Activated naive CD4-positive, alpha-beta T cell treated with anti-CD3 and anti-CD28 coated beads for 36 hours (primary cell): ENCODE measurements at regions of chr3 and their contacts with region 1.

Region 1: DNA sequence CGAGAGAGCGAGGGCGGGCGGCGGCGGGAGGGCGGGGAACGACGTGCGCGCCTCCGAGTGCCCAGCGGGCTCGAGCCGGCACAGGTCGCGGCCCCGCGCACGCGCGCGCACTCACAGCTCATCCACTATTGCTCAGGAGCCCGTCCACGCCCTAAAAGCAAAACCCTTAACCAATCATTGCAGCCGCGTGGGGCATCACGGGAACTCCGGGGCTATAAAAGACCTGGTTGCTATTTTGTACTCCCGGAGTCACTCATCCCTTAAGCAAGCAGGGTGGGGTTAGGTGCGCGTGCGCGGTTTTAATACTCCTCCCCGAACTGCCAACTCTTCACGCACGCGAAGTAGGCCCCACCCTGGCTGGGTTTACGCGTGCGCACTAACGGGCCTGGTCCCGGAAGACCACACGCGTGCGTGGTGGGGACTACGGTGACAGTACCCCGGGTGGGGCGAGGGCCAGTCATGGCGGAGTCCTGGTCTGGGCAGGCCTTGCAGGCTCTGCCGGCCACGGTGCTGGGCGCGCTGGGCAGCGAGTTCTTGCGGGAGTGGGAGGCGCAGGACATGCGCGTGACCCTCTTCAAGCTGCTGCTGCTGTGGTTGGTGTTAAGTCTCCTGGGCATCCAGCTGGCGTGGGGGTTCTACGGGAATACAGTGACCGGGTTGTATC is at the starts of genes RHOA and TCTA:
- DNase-seq: peak; percentile 99
- H3K4me3 Mint-ChIP-seq: peak within 1 kb of the TSS; percentile 94
- H3K27ac Mint-ChIP-seq: peak within 1 kb of the TSS; percentile 92
- H3K4me1 Mint-ChIP-seq: peaks cover 65% of the 10 kb centered on the region
- H3K27me3 Mint-ChIP-seq: no peaks in the 10 kb centered on the region
- total RNA-seq, gene RHOA: 463 to 491 TPM
- total RNA-seq, gene TCTA: 9.4 to 9.5 TPM

Region 2: DNA sequence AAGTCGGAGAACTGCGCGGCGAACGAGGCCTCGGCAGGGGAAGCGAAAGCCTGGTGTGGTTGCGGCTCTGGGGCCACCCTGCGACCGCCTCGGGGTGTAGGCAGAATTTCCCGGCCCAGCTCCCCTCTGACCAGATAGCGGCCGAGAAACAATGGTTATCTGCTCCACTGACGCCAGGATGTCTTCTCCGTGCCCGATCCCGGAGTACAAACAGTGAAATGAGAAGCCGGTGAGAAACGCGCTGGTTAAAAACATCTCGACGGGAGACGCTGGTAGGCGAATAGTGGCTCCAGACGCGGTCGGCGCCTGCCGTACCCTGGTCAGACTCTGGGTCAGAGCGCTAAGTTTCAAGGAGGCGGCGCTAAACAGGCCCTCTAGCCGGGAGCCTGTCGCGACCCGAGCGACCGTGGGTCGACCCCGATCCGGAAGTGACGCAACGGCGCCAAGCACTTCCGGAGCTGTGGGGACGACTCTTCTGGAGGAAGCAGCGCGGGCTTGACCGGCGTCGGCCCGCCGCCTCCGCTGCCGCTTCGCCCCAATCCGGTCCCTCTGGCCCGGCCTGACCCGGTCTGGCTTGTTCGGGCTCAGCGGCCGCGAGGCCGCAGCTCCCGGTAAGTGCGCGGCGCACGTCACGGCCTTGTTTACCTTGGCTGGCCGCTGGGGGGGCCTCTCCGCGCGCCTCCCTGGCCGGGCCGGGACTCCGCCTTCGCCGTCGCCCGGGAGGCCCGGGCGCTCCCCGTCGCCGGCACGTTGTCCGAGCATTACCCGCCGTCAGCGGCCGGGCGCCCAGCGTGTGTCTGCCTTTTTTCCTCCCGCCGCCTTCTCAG is 493.5 kb before region 1 on chr3 and contains the start of gene ARIH2:
- CTCF ChIA-PET with region 1: no interaction called
- intact Hi-C with region 1: loop called (anchors 1 kb)
- DNase-seq: peak; percentile 89
- H3K4me3 Mint-ChIP-seq: peak within 1 kb of the TSS; percentile 98
- H3K27ac Mint-ChIP-seq: peak within 1 kb of the TSS; percentile 100
- H3K4me1 Mint-ChIP-seq: peaks cover 29% of the 10 kb centered on the region
- H3K27me3 Mint-ChIP-seq: no peaks in the 10 kb centered on the region
- total RNA-seq, gene ARIH2: 96.1 to 99.1 TPM

Region 3: GRCh38 chr3:49358217-49358883 is 53.8 kb before region 1 on chr3 and contains the start of gene GPX1:
- CTCF ChIA-PET with region 1: interaction called, 3 read pairs
- intact Hi-C with region 1: loop called (anchors 1 kb)
- DNase-seq: peak; percentile 93
- H3K4me3 Mint-ChIP-seq: peak within 1 kb of the TSS; percentile 92
- H3K27ac Mint-ChIP-seq: peak within 1 kb of the TSS; percentile 94
- H3K4me1 Mint-ChIP-seq: peaks cover 23% of the 10 kb centered on the region
- H3K27me3 Mint-ChIP-seq: no peaks in the 10 kb centered on the region
- total RNA-seq, gene GPX1: 198 to 202 TPM

Region 4: GRCh38 chr3:49428697-49429100 is 16.6 kb after region 1 on chr3:
- CTCF ChIA-PET with region 1: interaction called, 4 read pairs
- intact Hi-C with region 1: loop called (anchors 1 kb)
- DNase-seq: no peak
- H3K4me3 Mint-ChIP-seq: peak overlapping the region; percentile 90
- H3K27ac Mint-ChIP-seq: peak overlapping the region; percentile 93
- H3K4me1 Mint-ChIP-seq: peaks cover 12% of the 10 kb centered on the region
- H3K27me3 Mint-ChIP-seq: no peaks in the 10 kb centered on the region

Region 5: DNA sequence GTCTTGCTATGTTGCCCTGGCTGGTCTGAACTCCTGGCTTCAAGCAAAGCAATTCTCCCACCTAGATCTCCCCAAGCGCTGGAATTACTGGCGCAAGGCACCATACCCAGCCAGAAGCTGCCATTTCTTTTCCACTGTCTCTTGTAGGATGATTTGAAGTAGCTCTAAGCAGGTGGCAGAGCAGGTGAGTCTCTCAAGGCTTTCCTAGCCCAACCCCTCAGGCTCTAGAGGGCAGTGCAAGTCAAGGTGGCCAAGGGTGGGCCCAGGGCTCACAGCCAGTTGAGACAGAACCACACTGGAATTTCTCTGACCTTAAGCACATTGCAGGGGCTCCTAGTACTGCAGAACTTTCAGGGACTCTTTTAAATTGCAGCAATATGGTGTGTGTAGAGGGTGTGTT is 42.4 kb after region 1 on chr3:
- CTCF ChIA-PET with region 1: interaction called, 23 read pairs
- intact Hi-C with region 1: loop called (anchors 1 kb)
- DNase-seq: peak; percentile 30
- H3K4me3 Mint-ChIP-seq: no peak overlapping the region
- H3K27ac Mint-ChIP-seq: no peak overlapping the region
- H3K4me1 Mint-ChIP-seq: no peaks in the 10 kb centered on the region
- H3K27me3 Mint-ChIP-seq: no peaks in the 10 kb centered on the region

Region 6: GRCh38 chr3:49553692-49554632 is 141.9 kb after region 1 on chr3 and contains the start of gene BSN:
- CTCF ChIA-PET with region 1: no interaction called
- intact Hi-C with region 1: loop called (anchors 1 kb)
- DNase-seq: peak; percentile 88
- H3K4me3 Mint-ChIP-seq: peak within 1 kb of the TSS; percentile 87
- H3K27ac Mint-ChIP-seq: no peak within 1 kb of the TSS
- H3K4me1 Mint-ChIP-seq: peaks cover 12% of the 10 kb centered on the region
- H3K27me3 Mint-ChIP-seq: peaks cover 40% of the 10 kb centered on the region
- total RNA-seq, gene BSN: 0.12 to 0.20 TPM